HCT116 (cell line): ENCODE measurements at regions of chr5 and their contacts with region 1.

Region 1: GRCh38 chr5:174418928-174419796 is 305.2 kb upstream of the MSX2 start:
- DNase-seq: peak; percentile 89
- ATAC-seq: peak; percentile 96
- H3K4me3 ChIP-seq: peak overlapping the region; percentile 29 to 61
- H3K27ac ChIP-seq: no peak overlapping the region
- H3K4me1 ChIP-seq: peaks cover 5 to 10% of the 10 kb centered on the region in 2 experiments; a peak in 3 of 4 replicates
- H3K27me3 ChIP-seq: no peaks in the 10 kb centered on the region; the same call in 1 of the 2 replicates
- CTCF ChIP-seq: peak; percentile 91 to 97 (median 94)
- POLR2A ChIP-seq: no peak
- RAD21 ChIP-seq: peak; percentile 99

Region 2: GRCh38 chr5:174327317-174328236 is 91.6 kb before region 1 on chr5:
- CTCF ChIA-PET with region 1: interaction called, 4 read pairs
- POLR2A ChIA-PET with region 1: no interaction called
- RAD21 ChIA-PET with region 1: interaction called, 4 to 5 read pairs
- intact Hi-C with region 1: loop called (anchors 2 kb)
- DNase-seq: peak; percentile 75
- ATAC-seq: peak; percentile 87
- H3K4me3 ChIP-seq: no peak overlapping the region
- H3K27ac ChIP-seq: peak overlapping the region; percentile 9; the same call in 1 of the 2 replicates
- H3K4me1 ChIP-seq: peaks cover 14 to 25% of the 10 kb centered on the region in 2 experiments
- H3K27me3 ChIP-seq: peaks cover 8% of the 10 kb centered on the region; the same call in 1 of the 2 replicates
- CTCF ChIP-seq: peak; percentile 86 to 97 (median 92)
- POLR2A ChIP-seq: no peak
- RAD21 ChIP-seq: peak; percentile 94

Region 3: GRCh38 chr5:174436781-174437201 is 17.6 kb after region 1 on chr5:
- CTCF ChIA-PET with region 1: interaction called, 16 read pairs
- POLR2A ChIA-PET with region 1: no interaction called
- RAD21 ChIA-PET with region 1: interaction called in 1 of 2 experiments, 4 read pairs
- intact Hi-C with region 1: no loop called
- DNase-seq: no peak
- ATAC-seq: no peak
- H3K4me3 ChIP-seq: no peak overlapping the region
- H3K27ac ChIP-seq: no peak overlapping the region
- H3K4me1 ChIP-seq: peaks cover 0 to 3% of the 10 kb centered on the region in 2 experiments; a peak in 1 of 4 replicates
- H3K27me3 ChIP-seq: peaks cover 6% of the 10 kb centered on the region; the same call in 1 of the 2 replicates
- CTCF ChIP-seq: no peak
- POLR2A ChIP-seq: no peak
- RAD21 ChIP-seq: no peak

Region 4: GRCh38 chr5:174741352-174741751 is 322.2 kb after region 1 on chr5:
- CTCF ChIA-PET with region 1: interaction called, 47 read pairs
- POLR2A ChIA-PET with region 1: interaction called, 4 read pairs
- RAD21 ChIA-PET with region 1: interaction called, 4 read pairs
- intact Hi-C with region 1: loop called (anchors 1 kb)
- DNase-seq: no peak
- ATAC-seq: no peak
- H3K4me3 ChIP-seq: no peak overlapping the region
- H3K27ac ChIP-seq: no peak overlapping the region
- H3K4me1 ChIP-seq: peaks cover 2 to 3% of the 10 kb centered on the region in 2 experiments
- H3K27me3 ChIP-seq: peaks cover 11% of the 10 kb centered on the region; the same call in 1 of the 2 replicates
- CTCF ChIP-seq: no peak
- POLR2A ChIP-seq: no peak
- RAD21 ChIP-seq: no peak

Region 5: DNA sequence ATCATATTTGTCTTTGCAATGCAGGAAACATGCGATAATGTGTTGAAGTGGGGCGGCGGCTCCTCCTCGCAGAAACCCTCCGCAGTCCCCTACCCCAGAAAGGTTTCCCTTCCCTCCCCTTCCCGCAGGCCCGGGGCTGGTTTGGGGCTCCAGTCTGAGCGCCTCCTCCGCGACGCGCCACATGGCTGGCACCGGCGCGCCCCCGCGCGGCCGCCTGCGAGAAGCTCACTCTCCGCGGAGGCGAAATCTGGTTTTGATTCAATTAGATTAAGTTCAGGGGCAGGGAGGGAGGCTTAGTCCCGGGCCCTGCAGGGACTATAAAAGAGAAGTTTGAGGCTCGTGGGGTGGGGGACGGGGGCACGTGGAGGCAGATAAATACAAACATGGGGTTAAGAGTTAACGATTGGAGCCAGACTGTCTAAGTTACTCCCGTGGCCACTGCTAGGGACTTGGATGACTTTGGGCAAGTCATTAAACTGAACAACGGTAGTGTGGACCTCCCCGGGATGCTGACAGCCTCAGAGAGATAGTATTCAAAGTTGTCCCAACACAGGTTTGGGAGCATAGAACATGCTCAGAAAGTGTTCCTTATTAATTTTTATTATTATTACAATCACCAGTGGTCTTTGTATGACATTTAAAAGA is 374.6 kb after region 1 on chr5:
- CTCF ChIA-PET with region 1: interaction called, 27 read pairs
- POLR2A ChIA-PET with region 1: no interaction called
- RAD21 ChIA-PET with region 1: interaction called, 5 to 6 read pairs
- intact Hi-C with region 1: loop called (anchors 1 kb)
- DNase-seq: peak; percentile 29
- ATAC-seq: peak; percentile 96
- H3K4me3 ChIP-seq: no peak overlapping the region
- H3K27ac ChIP-seq: no peak overlapping the region
- H3K4me1 ChIP-seq: peaks cover 0 to 8% of the 10 kb centered on the region in 2 experiments; a peak in 1 of 4 replicates
- H3K27me3 ChIP-seq: 0 out of 2 replicates have a peak, but pooled peaks cover 7% of the 10 kb centered on the region
- CTCF ChIP-seq: peak; percentile 85 to 94 (median 93)
- POLR2A ChIP-seq: no peak
- RAD21 ChIP-seq: peak; percentile 89